Heart right ventricle (tissue), 16 donors: ENCODE measurements at regions of chr7 and their contacts with region 1.

Region 1: GRCh38 chr7:115844857-115845256 is 185.7 kb downstream of the TFEC start:
- DNase-seq: no peak
- ATAC-seq: peak in 2 of 8 donors; percentile 51 to 65
- H3K4me3 ChIP-seq: no peak overlapping the region
- H3K27ac ChIP-seq: no peak overlapping the region
- H3K4me1 ChIP-seq: peaks cover 0 to 8% (median 0%) of the 10 kb centered on the region in 9 donors
- H3K27me3 ChIP-seq: no peaks in the 10 kb centered on the region
- CTCF ChIP-seq: no peak

Region 2: DNA sequence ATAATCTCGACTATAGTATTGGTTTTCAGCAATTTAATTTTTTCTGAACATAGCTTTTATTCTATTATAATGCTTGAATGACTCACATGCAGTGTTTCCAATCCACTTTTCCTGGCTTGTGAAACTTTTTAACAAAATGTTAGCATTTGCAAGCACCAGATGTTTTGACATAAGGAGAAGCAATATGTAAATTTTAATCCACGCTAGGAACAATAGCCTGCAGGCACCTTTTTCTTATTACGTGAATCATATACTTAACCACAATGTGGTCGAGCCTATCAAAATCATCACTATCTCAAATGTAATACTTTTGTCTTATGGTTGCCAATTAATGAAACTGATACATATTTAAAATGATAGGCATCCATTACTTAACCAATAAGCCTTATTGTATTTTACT is 88.6 kb after region 1 on chr7:
- intact Hi-C with region 1: loop called in 1 of 10 experiments (anchors 5 kb)
- DNase-seq: no peak
- ATAC-seq: no peak
- H3K4me3 ChIP-seq: no peak overlapping the region
- H3K27ac ChIP-seq: no peak overlapping the region
- H3K4me1 ChIP-seq: no peaks in the 10 kb centered on the region
- H3K27me3 ChIP-seq: no peaks in the 10 kb centered on the region
- CTCF ChIP-seq: no peak